SK-N-SH (cell line): ENCODE measurements at regions of chr7 and their contacts with region 1.

Region 1: GRCh38 chr7:32204361-32205018 is 134.3 kb upstream of the PDE1C start:
- DNase-seq: peak; percentile 43
- H3K4me3 ChIP-seq: peak overlapping the region; percentile 42 to 58
- H3K27ac ChIP-seq: no peak overlapping the region
- H3K4me1 ChIP-seq: no peaks in the 10 kb centered on the region
- H3K27me3 ChIP-seq: peaks cover 39% of the 10 kb centered on the region
- CTCF ChIP-seq: peak; percentile 98
- EP300 ChIP-seq: no peak
- RAD21 ChIP-seq: peak; percentile 88

Region 2: GRCh38 chr7:31744294-31744874 is 460.1 kb before region 1 on chr7:
- CTCF ChIA-PET with region 1: interaction called, 10 read pairs
- POLR2A ChIA-PET with region 1: no interaction called
- DNase-seq: peak; percentile 49
- H3K4me3 ChIP-seq: no peak overlapping the region; a peak in 1 of 4 replicates
- H3K27ac ChIP-seq: no peak overlapping the region
- H3K4me1 ChIP-seq: no peaks in the 10 kb centered on the region
- H3K27me3 ChIP-seq: peaks cover 37% of the 10 kb centered on the region; the same call in 1 of the 2 replicates
- CTCF ChIP-seq: peak; percentile 100
- EP300 ChIP-seq: no peak
- RAD21 ChIP-seq: peak; percentile 96

Region 3: GRCh38 chr7:31782411-31782991 is 422.0 kb before region 1 on chr7:
- CTCF ChIA-PET with region 1: interaction called, 13 read pairs
- POLR2A ChIA-PET with region 1: no interaction called
- DNase-seq: peak; percentile 65
- H3K4me3 ChIP-seq: no peak overlapping the region; a peak in 1 of 4 replicates
- H3K27ac ChIP-seq: no peak overlapping the region
- H3K4me1 ChIP-seq: no peaks in the 10 kb centered on the region
- H3K27me3 ChIP-seq: no peaks in the 10 kb centered on the region
- CTCF ChIP-seq: peak; percentile 90
- EP300 ChIP-seq: no peak
- RAD21 ChIP-seq: peak; percentile 63

Region 4: DNA sequence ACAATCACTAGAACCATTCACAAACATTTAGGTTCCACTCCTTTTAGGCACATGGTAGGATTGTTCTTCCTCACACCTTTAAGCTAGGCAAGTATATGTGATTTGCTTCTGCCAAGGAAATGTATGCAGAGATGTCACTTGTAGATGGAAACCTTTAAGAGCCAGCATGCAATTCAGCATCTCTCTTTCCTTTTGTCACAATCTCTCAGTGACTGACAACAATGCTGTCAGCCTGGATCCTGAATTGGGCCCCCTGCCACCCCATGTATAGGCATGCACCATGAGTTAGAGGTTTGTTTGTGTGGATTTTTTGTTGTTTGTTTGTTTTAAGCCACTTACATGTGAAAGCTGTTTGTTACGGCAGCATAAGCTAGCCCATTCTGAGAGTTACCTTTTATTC is 35.3 kb after region 1 on chr7:
- CTCF ChIA-PET with region 1: interaction called, 11 read pairs
- POLR2A ChIA-PET with region 1: no interaction called
- DNase-seq: no peak
- H3K4me3 ChIP-seq: no peak overlapping the region
- H3K27ac ChIP-seq: no peak overlapping the region
- H3K4me1 ChIP-seq: no peaks in the 10 kb centered on the region
- H3K27me3 ChIP-seq: no peaks in the 10 kb centered on the region; the same call in 1 of the 2 replicates
- CTCF ChIP-seq: no peak
- EP300 ChIP-seq: no peak
- RAD21 ChIP-seq: no peak

Region 5: DNA sequence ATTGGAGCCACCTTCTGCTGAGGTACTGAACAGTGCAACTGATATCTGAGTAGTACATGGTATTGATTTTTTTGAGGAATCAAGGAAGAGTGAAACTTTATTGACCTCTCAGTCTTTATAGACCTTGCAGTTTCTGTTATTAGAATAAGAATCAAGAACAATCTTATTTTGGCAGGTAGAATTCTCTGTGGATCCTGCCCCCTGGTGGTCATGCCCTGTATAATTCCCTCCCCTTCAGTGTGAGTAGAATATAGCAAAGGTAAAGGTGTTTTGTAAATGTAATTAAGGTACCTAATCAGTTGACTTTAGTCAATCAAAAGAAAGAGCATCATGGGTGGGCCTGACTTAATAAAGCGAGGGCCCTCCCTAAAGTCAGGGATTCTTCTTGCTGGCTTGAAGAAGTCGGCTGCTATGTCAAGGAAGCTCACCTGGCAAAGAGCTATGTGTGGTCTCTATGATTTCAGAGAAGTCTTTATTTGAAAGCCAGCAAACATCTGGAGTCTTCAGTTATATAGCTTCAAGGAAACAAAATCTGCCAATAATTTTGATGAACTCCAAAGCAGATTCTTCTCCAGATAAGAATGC is 142.8 kb after region 1 on chr7:
- CTCF ChIA-PET with region 1: interaction called, 39 read pairs
- POLR2A ChIA-PET with region 1: no interaction called
- DNase-seq: peak; percentile 44
- H3K4me3 ChIP-seq: peak overlapping the region in 1 of 2 experiments; percentile 35; a peak in 1 of 4 replicates
- H3K27ac ChIP-seq: no peak overlapping the region
- H3K4me1 ChIP-seq: no peaks in the 10 kb centered on the region
- H3K27me3 ChIP-seq: no peaks in the 10 kb centered on the region
- CTCF ChIP-seq: peak; percentile 98
- EP300 ChIP-seq: no peak
- RAD21 ChIP-seq: peak; percentile 55

Region 6: DNA sequence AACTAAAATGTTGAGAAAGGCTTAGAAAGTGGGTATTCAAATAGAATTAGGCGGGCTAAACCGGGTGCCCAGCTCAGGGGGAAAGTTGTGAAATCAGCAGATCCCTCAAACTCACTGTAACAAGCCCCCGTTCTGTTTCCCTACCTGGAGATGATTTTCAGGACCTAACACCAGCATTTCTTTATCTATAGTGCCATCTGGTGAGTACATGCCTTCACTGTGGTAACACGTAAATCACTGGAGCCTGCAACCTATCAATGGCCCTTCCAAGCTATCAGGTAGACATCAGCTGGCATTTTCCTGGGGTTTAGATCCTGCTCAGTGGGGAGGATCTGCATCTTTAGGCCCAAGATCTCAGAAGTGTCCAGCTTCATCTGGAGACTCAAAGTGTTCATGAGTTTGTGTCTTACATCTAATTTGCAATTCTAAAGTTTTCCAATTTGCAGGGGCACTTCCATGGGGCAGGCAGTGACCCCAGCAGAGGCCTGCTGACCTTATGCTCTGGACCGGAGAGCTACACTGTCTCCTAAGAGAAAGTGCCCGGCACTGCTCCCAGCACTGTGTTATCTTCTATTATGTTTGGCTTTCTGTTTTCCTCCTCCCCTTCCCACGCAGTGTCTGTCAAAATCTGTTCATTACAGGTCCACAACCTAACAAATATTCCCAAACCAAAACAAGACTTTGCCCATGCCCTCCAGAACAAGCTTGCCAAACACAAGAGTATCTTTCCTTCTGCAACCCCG is 153.2 kb after region 1 on chr7:
- CTCF ChIA-PET with region 1: interaction called, 13 read pairs
- POLR2A ChIA-PET with region 1: no interaction called
- DNase-seq: no peak
- H3K4me3 ChIP-seq: no peak overlapping the region
- H3K27ac ChIP-seq: no peak overlapping the region
- H3K4me1 ChIP-seq: no peaks in the 10 kb centered on the region
- H3K27me3 ChIP-seq: peaks cover 64% of the 10 kb centered on the region
- CTCF ChIP-seq: no peak
- EP300 ChIP-seq: no peak
- RAD21 ChIP-seq: no peak

Region 7: DNA sequence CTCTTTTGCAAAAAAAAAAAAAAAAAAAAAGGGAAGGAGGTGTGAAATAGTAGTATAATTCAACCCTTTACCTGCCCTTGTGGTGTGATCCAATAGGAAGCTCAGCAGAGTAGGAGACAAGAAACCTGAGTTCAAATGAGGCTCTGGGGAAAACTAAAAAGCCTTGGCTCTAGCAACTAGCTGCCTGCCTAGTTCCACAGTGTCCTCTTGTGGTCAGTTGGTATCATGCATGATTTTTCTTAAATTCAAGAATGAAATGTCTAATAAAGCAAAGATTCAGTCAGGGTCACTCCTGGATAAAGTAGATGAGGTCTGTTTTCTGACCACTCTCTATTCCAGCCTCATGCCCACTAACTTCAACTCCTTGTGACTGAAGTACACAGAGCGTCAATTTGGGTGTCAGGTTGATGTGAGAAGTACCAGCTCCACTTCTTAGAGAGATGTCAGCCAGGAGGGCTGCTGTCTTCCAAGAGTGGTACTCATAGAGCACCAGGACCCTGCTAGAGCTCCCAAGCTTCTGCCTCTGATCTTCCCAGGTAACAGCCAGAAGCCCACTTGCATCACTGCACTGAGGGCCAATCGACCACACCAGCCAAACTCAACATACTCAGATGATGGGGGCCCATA is 275.2 kb after region 1 on chr7:
- CTCF ChIA-PET with region 1: interaction called, 163 read pairs
- POLR2A ChIA-PET with region 1: no interaction called
- DNase-seq: peak; percentile 66
- H3K4me3 ChIP-seq: no peak overlapping the region
- H3K27ac ChIP-seq: no peak overlapping the region
- H3K4me1 ChIP-seq: peaks cover 0 to 14% of the 10 kb centered on the region in 2 experiments; a peak in 2 of 4 replicates
- H3K27me3 ChIP-seq: no peaks in the 10 kb centered on the region
- CTCF ChIP-seq: peak; percentile 97
- EP300 ChIP-seq: no peak
- RAD21 ChIP-seq: peak; percentile 98